GM12878 (cell line): ENCODE measurements at regions of chr9 and their contacts with region 1.

Region 1: GRCh38 chr9:37592108-37592951 is at the start of gene TOMM5:
- DNase-seq: peak; percentile 76
- ATAC-seq: peak; percentile 92
- H3K4me3 ChIP-seq: peak within 1 kb of the TSS; percentile 73
- H3K27ac ChIP-seq: peak within 1 kb of the TSS; percentile 94
- H3K4me1 ChIP-seq: peaks cover 8% of the 10 kb centered on the region
- H3K27me3 ChIP-seq: no peaks in the 10 kb centered on the region
- CTCF ChIP-seq: no peak
- EP300 ChIP-seq: no peak
- POLR2A ChIP-seq: peak; percentile 99
- RAD21 ChIP-seq: no peak
- polyA plus RNA-seq, gene TOMM5: 1,100 to 1,143 TPM

Region 2: GRCh38 chr9:37465249-37466036 is 126.9 kb before region 1 on chr9 and contains the start of gene ZBTB5:
- CTCF ChIA-PET with region 1: interaction called, 3 read pairs
- POLR2A ChIA-PET with region 1: interaction called, 4 read pairs
- RAD21 ChIA-PET with region 1: interaction called, 5 read pairs
- SMC1A ChIA-PET with region 1: no interaction called
- in situ Hi-C with region 1: no loop called
- intact Hi-C with region 1: loop called (anchors 1 kb)
- DNase-seq: peak; percentile 100
- ATAC-seq: peak; percentile 85
- H3K4me3 ChIP-seq: peak within 1 kb of the TSS; percentile 84
- H3K27ac ChIP-seq: peak within 1 kb of the TSS; percentile 92
- H3K4me1 ChIP-seq: no peaks in the 10 kb centered on the region
- H3K27me3 ChIP-seq: no peaks in the 10 kb centered on the region
- CTCF ChIP-seq: no peak
- EP300 ChIP-seq: no peak
- POLR2A ChIP-seq: no peak
- RAD21 ChIP-seq: no peak
- polyA plus RNA-seq, gene ZBTB5: 1.4 to 2.5 TPM

Region 3: DNA sequence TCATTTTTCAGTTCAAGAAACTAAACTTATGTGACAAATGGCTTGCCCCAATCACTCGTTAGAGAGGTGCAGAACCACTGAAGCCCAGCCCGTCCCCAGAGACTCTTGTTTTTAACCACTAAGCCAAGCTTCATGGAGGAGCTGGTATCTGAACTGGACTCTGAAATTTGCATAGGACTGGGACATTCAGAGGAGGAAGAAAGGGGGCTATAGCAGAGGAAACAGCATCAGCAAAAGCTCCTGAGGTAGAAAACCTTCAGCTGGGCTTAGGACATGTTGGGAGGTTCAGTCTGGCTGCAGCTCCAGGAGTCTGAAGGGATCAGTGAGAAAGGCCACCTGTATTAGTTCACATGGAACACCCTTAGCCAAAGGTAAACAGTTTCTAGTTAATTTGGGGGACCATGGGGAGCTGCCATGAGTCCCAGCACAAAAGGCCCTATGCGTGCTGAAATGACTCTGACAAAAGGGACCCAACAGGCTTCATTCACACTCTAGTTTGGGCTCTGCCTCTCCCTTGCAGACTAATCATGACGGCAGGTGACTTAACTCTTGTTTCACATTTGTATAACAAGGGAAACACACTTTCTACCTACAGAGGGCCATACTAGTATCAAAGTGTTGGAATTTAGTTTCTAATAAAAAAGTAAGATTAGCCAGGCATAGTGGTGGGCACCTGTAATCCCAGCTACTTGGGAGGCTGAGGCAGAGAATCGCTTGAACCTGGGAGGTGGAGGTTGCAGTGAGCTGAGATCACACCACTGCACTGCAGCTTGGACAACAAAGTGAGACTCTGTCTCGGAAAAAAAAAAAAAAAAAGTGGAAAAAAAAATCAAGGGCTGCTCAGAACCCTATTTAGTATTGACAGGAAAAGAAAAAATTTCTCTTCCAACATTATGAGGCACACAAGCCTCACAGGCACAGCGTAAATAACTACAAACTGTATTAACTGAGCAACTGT is 26.4 kb before region 1 on chr9:
- CTCF ChIA-PET with region 1: interaction called, 7 read pairs
- POLR2A ChIA-PET with region 1: interaction called, 9 read pairs
- RAD21 ChIA-PET with region 1: interaction called, 9 read pairs
- SMC1A ChIA-PET with region 1: interaction called, 11 read pairs
- in situ Hi-C with region 1: no loop called
- intact Hi-C with region 1: no loop called
- DNase-seq: peak; percentile 77
- ATAC-seq: peak; percentile 84
- H3K4me3 ChIP-seq: peak overlapping the region; percentile 57
- H3K27ac ChIP-seq: peak overlapping the region; percentile 95
- H3K4me1 ChIP-seq: peaks cover 53% of the 10 kb centered on the region
- H3K27me3 ChIP-seq: no peaks in the 10 kb centered on the region
- CTCF ChIP-seq: no peak
- EP300 ChIP-seq: no peak
- POLR2A ChIP-seq: peak; percentile 54
- RAD21 ChIP-seq: no peak

Region 4: GRCh38 chr9:37575921-37576721 is 16.2 kb before region 1 on chr9 and contains the start of gene FBXO10:
- CTCF ChIA-PET with region 1: interaction called, 55 read pairs
- POLR2A ChIA-PET with region 1: interaction called, 54 read pairs
- RAD21 ChIA-PET with region 1: interaction called, 27 read pairs
- SMC1A ChIA-PET with region 1: interaction called, 60 read pairs
- in situ Hi-C with region 1: no loop called
- intact Hi-C with region 1: no loop called
- DNase-seq: no peak
- ATAC-seq: peak; percentile 87
- H3K4me3 ChIP-seq: peak within 1 kb of the TSS; percentile 89
- H3K27ac ChIP-seq: peak within 1 kb of the TSS; percentile 78
- H3K4me1 ChIP-seq: peaks cover 5% of the 10 kb centered on the region
- H3K27me3 ChIP-seq: no peaks in the 10 kb centered on the region
- CTCF ChIP-seq: no peak
- EP300 ChIP-seq: 0 out of 4 replicates have a peak, but pooled peaks of 1 of the 2 experiments have one; percentile 6
- POLR2A ChIP-seq: peak; percentile 74
- RAD21 ChIP-seq: 0 out of 2 replicates have a peak, but pooled peaks have one; percentile 6
- polyA plus RNA-seq, gene FBXO10: 1.6 to 1.9 TPM